Natural killer cell (primary cell): ENCODE measurements at regions of chr16 and their contacts with region 1.

Region 1: DNA sequence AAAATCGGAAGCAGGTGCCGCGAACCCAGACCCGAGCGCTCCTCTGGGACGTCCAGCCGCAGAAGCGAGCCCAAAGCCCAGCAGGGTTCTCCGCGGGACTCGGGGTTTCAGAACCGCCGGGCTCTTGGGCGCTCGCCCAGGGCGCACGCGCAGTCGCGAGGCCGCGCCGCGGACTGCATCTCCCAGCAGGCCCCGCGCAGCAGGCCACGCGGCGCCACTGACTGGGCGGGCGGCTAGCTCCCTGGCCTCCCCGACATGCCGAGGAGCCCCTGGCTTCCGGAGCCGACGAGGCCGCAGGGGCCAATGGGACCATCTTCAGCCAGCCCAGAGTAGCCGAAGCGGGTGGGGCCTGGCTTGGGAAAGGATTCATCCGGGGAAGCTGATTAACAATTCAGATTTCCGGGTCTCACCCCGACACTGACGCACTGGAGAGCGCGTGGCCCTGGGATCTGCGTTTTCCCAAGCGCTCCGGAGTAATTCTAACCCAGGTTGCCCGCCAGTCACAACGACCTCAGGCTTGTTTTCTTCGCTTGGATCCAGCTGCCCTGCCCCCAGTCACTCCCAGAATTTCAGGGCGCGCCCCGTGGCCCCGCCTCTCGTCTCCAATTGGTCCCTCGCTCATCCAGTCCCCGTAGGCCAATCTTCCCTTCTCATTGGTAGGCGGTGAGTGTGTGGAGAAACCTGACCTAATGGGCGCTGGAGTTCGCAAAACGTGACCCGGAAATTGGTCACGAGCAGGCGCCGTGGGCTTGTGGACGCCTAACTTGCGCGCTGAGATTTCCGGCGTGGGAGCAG is at the start of gene ZNF263:
- DNase-seq: peak; percentile 87 to 97
- ATAC-seq: peak; percentile 88 to 93 (median 88)
- H3K4me3 ChIP-seq: peak within 1 kb of the TSS; percentile 88
- H3K4me3 Mint-ChIP-seq: peak within 1 kb of the TSS; percentile 98
- H3K27ac ChIP-seq: peak within 1 kb of the TSS; percentile 98
- H3K27ac Mint-ChIP-seq: peak within 1 kb of the TSS; percentile 92 to 95
- H3K4me1 ChIP-seq: peaks cover 34% of the 10 kb centered on the region
- H3K4me1 Mint-ChIP-seq: peaks cover 25 to 32% of the 10 kb centered on the region in 2 donors
- H3K27me3 ChIP-seq: no peaks in the 10 kb centered on the region
- H3K27me3 Mint-ChIP-seq: no peaks in the 10 kb centered on the region
- CTCF ChIP-seq: no peak
- total RNA-seq, gene ZNF263: 25.7 to 38.8 (median 28.1) TPM

Region 2: DNA sequence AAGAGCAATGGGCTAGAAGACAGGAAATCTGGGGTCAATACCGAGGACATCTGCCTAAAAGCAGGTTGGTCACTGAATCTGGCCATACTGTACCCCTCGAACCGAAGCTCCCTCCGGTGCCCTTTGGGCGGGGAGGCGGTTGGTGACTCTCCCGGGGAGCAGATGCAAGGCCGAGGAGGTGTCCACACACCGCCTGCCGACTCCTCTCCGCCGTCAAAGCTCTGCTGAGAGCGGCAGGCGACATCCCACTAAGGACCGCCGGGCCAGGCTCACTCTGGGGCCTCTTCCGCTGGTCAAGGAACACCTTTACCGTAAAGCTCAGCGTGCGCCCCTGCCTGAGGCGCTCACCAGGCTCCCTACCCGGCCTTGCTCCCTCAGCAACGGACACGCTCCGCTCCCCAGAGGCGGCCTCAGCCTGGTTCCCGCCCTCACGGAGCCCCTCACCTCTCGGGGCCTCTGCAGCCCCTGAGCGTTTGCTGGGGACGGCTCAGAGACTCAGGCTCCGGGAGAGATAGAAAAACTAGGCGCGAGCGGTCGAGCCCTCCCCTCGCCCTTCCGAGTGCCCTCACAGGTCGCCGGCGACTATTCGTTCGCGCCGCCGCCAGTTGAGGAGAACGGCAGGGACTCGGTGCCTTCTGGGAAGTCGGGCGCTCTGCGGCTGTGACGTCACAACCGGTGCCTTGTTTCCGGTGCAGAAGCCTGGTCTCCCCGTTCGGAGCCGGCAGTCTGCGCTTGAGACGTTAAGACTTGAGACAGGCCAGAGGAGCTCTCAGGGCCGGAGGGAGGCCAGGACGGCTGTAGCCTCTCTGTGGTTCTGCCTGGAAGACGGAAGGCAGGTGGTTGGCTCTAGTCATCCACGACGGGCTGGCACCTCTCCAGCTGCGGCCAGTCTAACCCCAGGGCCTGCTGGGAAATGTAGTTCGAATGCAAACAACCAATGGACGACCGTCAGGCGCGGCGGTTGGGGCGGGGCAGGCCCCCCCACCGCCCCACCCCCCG is 48.1 kb before region 1 on chr16 and contains the start of gene ZNF200:
- intact Hi-C with region 1: loop called (anchors 1 kb)
- DNase-seq: peak; percentile 90 to 97
- ATAC-seq: peak; percentile 92 to 95 (median 93)
- H3K4me3 ChIP-seq: peak within 1 kb of the TSS; percentile 97
- H3K4me3 Mint-ChIP-seq: peak within 1 kb of the TSS; percentile 92
- H3K27ac ChIP-seq: peak within 1 kb of the TSS; percentile 98
- H3K27ac Mint-ChIP-seq: peak within 1 kb of the TSS; percentile 94
- H3K4me1 ChIP-seq: peaks cover 18% of the 10 kb centered on the region
- H3K4me1 Mint-ChIP-seq: peaks cover 29 to 34% of the 10 kb centered on the region in 2 donors
- H3K27me3 ChIP-seq: no peaks in the 10 kb centered on the region
- H3K27me3 Mint-ChIP-seq: no peaks in the 10 kb centered on the region
- CTCF ChIP-seq: no peak
- total RNA-seq, gene ZNF200: 5.3 to 10.9 (median 5.6) TPM

Region 3: GRCh38 chr16:3246876-3247275 is 36.1 kb before region 1 on chr16:
- intact Hi-C with region 1: no loop called
- DNase-seq: no peak
- ATAC-seq: no peak
- H3K4me3 ChIP-seq: no peak overlapping the region
- H3K4me3 Mint-ChIP-seq: no peak overlapping the region
- H3K27ac ChIP-seq: no peak overlapping the region
- H3K27ac Mint-ChIP-seq: no peak overlapping the region
- H3K4me1 ChIP-seq: no peaks in the 10 kb centered on the region
- H3K4me1 Mint-ChIP-seq: no peaks in the 10 kb centered on the region
- H3K27me3 ChIP-seq: no peaks in the 10 kb centered on the region
- H3K27me3 Mint-ChIP-seq: peaks cover 18 to 32% of the 10 kb centered on the region in 2 donors
- CTCF ChIP-seq: no peak

Region 4: GRCh38 chr16:3264137-3265036 is 18.5 kb before region 1 on chr16:
- intact Hi-C with region 1: loop called (anchors 1 kb)
- DNase-seq: peak; percentile 93 to 97
- ATAC-seq: peak; percentile 87 to 90 (median 88)
- H3K4me3 ChIP-seq: peak overlapping the region; percentile 77
- H3K4me3 Mint-ChIP-seq: peak overlapping the region; percentile 90
- H3K27ac ChIP-seq: peak overlapping the region; percentile 95
- H3K27ac Mint-ChIP-seq: peak overlapping the region; percentile 92 to 93
- H3K4me1 ChIP-seq: peaks cover 17% of the 10 kb centered on the region
- H3K4me1 Mint-ChIP-seq: peaks cover 18 to 27% of the 10 kb centered on the region in 2 donors
- H3K27me3 ChIP-seq: no peaks in the 10 kb centered on the region
- H3K27me3 Mint-ChIP-seq: no peaks in the 10 kb centered on the region
- CTCF ChIP-seq: no peak

Region 5: GRCh38 chr16:3305109-3306068 is 22.5 kb after region 1 on chr16 and contains the starts of genes TIGD7 and ZNF75A:
- intact Hi-C with region 1: loop called (anchors 1 kb)
- DNase-seq: peak; percentile 80 to 93
- ATAC-seq: peak; percentile 92 to 98 (median 93)
- H3K4me3 ChIP-seq: peak within 1 kb of the TSS; percentile 74
- H3K4me3 Mint-ChIP-seq: peak within 1 kb of the TSS; percentile 76
- H3K27ac ChIP-seq: peak within 1 kb of the TSS; percentile 89
- H3K27ac Mint-ChIP-seq: peak within 1 kb of the TSS; percentile 81 to 84
- H3K4me1 ChIP-seq: peaks cover 20% of the 10 kb centered on the region
- H3K4me1 Mint-ChIP-seq: peaks cover 11 to 21% of the 10 kb centered on the region in 2 donors
- H3K27me3 ChIP-seq: no peaks in the 10 kb centered on the region
- H3K27me3 Mint-ChIP-seq: no peaks in the 10 kb centered on the region
- CTCF ChIP-seq: no peak
- total RNA-seq, gene TIGD7: 3.7 to 9.1 (median 3.7) TPM
- total RNA-seq, gene ZNF75A: 30.6 to 44.6 (median 39.0) TPM

Region 6: GRCh38 chr16:3346041-3346440 is 63.1 kb after region 1 on chr16:
- intact Hi-C with region 1: no loop called
- DNase-seq: no peak
- ATAC-seq: no peak
- H3K4me3 ChIP-seq: no peak overlapping the region
- H3K4me3 Mint-ChIP-seq: no peak overlapping the region
- H3K27ac ChIP-seq: no peak overlapping the region
- H3K27ac Mint-ChIP-seq: no peak overlapping the region
- H3K4me1 ChIP-seq: no peaks in the 10 kb centered on the region
- H3K4me1 Mint-ChIP-seq: no peaks in the 10 kb centered on the region
- H3K27me3 ChIP-seq: peaks cover 2% of the 10 kb centered on the region
- H3K27me3 Mint-ChIP-seq: peaks cover 3 to 7% of the 10 kb centered on the region in 2 donors
- CTCF ChIP-seq: no peak

Region 7: DNA sequence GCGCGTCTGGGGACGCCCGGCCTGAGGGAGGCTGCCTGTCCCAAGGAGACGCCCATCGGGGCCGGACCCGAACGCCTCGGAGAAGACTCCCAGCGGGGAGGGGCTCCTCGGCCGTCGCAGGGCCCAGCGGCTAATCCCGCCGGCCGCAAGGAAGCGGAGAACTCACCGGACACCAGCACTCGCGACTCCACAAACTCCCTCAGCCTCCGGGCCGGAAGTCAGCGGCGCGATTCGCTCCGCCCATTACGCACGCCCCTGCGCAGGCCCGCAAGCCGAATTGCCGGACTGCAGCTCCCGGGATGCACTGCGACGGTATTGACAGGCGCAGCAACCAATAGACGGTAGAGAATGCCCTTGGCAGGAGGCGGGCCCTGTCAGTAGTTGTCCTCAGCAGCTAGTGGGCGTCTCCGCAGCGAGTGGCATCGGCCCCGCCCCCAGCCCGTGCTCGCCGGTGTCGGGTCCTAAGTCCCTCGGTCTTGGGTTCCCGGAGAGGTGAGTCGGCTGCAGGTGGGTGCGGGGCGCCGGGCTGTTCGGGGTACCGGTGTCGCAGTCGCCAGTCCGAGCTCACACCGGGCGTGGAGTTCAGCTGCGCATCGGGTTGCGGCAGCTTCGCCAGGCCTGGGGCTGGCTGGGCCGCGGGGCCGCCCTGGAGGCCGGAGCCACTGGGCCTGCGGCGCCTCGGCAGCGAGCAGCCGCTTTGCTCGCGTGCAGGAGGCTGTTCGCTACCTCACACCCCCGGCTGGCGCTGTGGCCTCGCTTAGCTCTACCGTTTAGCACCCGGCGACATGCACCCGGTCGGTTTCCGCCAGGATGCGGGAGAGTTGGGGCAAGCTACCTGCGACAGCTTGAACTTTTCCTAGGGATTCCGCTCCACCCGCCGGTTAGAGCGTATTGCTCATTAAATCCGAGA is 118.1 kb after region 1 on chr16 and contains the starts of genes ZNF174 and ZSCAN32:
- intact Hi-C with region 1: loop called (anchors 1 kb)
- DNase-seq: peak; percentile 98 to 99
- ATAC-seq: peak; percentile 96 to 99 (median 97)
- H3K4me3 ChIP-seq: peak within 1 kb of the TSS; percentile 68
- H3K4me3 Mint-ChIP-seq: peak within 1 kb of the TSS; percentile 95
- H3K27ac ChIP-seq: peak within 1 kb of the TSS; percentile 74
- H3K27ac Mint-ChIP-seq: peak within 1 kb of the TSS; percentile 87 to 90
- H3K4me1 ChIP-seq: peaks cover 19% of the 10 kb centered on the region
- H3K4me1 Mint-ChIP-seq: peaks cover 41 to 48% of the 10 kb centered on the region in 2 donors
- H3K27me3 ChIP-seq: no peaks in the 10 kb centered on the region
- H3K27me3 Mint-ChIP-seq: no peaks in the 10 kb centered on the region
- CTCF ChIP-seq: no peak
- total RNA-seq, gene ZNF174: 3.5 to 9.0 (median 7.5) TPM
- total RNA-seq, gene ZSCAN32: 7.5 to 14.2 (median 14.1) TPM

Region 8: DNA sequence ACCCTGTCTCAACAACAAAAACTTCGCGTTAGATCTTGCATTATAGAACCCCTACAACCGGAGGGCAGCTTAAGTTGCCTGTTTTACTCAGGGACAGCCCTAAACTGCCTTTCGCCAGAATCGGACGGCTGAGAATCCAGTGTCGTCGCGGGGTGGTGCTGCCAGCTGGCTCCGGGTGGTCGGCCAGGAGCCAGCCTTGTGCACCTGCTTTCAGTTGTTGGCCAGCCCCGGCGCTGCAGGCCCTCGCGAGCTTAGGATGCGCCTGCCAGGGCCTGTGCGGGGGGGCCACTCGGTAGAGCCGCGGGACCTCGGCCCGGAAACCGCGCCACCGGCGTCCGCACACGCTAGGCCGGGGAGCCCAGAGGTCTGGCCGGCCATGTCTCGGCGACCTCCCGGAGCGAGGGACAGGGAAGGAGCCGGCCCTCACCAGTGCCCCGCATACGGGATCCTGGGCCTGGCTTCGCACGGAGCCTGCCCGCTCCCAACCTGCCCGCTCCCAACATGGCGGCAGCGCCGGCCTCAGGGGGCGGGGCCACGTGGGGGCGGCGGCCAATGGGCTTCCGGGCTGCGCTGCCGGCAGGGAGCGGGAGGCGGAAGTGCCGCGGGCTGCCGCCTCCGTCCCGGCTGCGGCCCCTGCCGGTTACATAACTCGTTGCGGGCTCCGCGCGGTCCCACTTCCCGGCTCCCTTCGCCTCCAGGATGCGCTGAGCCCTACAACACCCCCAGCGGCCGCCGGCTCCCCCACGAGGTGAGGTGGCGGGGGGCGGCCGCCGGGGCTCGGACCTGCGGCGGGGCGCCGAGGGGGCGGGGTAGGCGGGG is 174.7 kb after region 1 on chr16:
- intact Hi-C with region 1: loop called (anchors 1 kb)
- DNase-seq: peak; percentile 89 to 96
- ATAC-seq: peak; percentile 88 to 96 (median 91)
- H3K4me3 ChIP-seq: peak overlapping the region; percentile 66
- H3K4me3 Mint-ChIP-seq: peak overlapping the region; percentile 81
- H3K27ac ChIP-seq: peak overlapping the region; percentile 85
- H3K27ac Mint-ChIP-seq: peak overlapping the region; percentile 75 to 86
- H3K4me1 ChIP-seq: peaks cover 40% of the 10 kb centered on the region
- H3K4me1 Mint-ChIP-seq: peaks cover 44 to 47% of the 10 kb centered on the region in 2 donors
- H3K27me3 ChIP-seq: no peaks in the 10 kb centered on the region
- H3K27me3 Mint-ChIP-seq: no peaks in the 10 kb centered on the region
- CTCF ChIP-seq: peak; percentile 19